ENCODE measurements at regions of chr19 and their contacts with region 1.

Region 1: DNA sequence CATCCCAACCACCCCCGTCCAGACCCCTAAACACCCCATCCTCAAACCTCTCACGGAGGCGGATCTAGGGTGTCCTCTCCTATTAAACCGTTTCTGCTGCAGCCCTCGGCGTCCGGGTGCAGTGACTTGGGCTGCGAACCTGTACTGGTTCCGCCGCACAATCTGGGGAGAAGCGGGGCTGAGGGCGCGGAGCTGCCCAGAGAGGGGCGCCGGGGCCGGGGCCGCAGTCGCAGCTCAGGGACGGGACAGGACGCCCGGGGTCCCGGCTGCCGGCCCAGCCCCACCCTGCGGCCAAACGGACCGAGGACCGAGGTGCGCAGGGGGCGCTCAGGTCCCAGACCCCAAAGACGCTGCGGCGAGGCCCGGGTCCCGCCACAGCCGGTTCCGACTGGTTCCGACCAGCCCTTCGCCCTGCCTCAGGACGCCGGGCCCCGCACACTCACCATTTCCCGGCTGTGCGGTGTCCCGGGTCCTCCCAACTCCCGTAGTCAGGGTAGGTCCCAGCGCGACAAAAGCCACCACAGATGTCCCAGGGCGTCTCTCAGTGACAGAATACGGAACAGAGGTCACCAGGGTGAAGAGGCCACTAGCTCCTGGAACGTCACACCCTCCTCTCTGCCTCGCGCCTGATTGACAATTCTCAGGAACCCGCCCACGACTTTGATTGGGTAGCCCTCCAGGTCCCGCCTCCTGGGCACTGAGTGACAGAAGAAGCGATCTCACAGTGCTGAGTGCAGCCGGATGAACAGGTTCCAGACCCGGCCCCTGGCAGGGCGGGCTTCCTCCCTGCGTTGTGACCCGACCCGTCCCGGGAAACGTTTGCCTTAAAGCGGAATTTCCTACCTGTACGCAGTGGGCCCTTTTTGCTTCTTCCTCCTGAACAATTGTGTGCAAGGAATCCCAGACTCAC is at the start of gene ZNF44:
- DNase-seq: peak; percentile 99
- H3K4me3 Mint-ChIP-seq: peak within 1 kb of the TSS; percentile 94
- H3K27ac Mint-ChIP-seq: peak within 1 kb of the TSS; percentile 92
- H3K4me1 Mint-ChIP-seq: peaks cover 1% of the 10 kb centered on the region
- H3K27me3 Mint-ChIP-seq: no peaks in the 10 kb centered on the region
- CTCF ChIP-seq: no peak
- total RNA-seq, gene ZNF44: 10.3 and 10.5 TPM in 2 replicates

Region 2: DNA sequence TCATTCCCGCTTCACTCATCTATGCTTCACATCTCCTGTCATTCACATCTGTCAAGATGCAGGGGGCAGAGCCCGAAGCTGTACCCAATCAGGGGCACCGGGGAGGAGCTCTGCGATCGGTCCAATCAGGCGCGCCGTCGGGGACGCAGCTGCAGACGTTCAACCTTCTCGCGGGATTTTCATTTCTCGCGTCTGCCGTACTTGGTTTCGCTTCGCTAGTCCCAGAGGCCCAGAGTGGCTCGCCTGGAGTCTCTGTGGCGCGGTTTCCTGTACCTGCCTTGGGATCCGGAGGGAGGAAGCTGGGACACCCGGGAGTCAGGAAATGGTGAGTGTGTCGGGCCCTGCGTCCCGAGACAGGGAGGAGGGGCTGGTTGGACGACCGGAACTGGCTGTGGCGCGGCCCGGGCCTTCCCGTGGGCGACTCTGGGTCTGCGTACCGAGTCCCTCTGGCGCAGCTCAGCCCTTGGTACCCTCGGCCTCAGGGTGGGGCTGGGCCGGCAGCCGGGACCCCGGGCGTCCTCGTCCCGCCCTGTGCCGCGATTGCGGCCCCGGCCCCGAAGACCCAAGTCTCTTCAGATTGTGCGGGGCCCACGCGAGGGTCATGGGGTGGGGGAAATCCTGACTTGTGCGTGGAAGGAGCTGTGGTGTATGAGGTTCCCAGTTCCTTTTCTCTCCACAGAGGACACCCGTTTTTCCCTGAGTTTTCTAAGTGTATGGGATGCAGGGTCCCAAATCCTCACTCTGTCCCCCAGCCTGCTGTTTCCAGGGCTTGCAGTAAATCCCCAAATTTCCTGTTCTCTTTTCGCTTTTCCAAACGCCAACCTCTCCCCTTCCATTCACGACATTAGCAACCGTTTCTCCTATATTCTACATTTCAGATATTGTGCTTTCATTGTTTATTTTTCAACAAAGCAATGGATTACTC is 131.4 kb before region 1 on chr19 and contains the start of gene ZNF136:
- CTCF ChIA-PET with region 1: no interaction called
- POLR2A ChIA-PET with region 1: interaction called, 10 read pairs
- intact Hi-C with region 1: loop called (anchors 2 kb)
- DNase-seq: peak; percentile 96
- H3K4me3 Mint-ChIP-seq: peak within 1 kb of the TSS; percentile 83
- H3K27ac Mint-ChIP-seq: peak within 1 kb of the TSS; percentile 97
- H3K4me1 Mint-ChIP-seq: peaks cover 8% of the 10 kb centered on the region
- H3K27me3 Mint-ChIP-seq: no peaks in the 10 kb centered on the region
- CTCF ChIP-seq: no peak
- total RNA-seq, gene ZNF136: 3.7 and 4.3 TPM in 2 replicates

Region 3: GRCh38 chr19:12230751-12231733 is 63.5 kb before region 1 on chr19:
- CTCF ChIA-PET with region 1: no interaction called
- POLR2A ChIA-PET with region 1: interaction called, 12 read pairs
- intact Hi-C with region 1: no loop called
- DNase-seq: no peak
- H3K4me3 Mint-ChIP-seq: no peak overlapping the region
- H3K27ac Mint-ChIP-seq: peak overlapping the region; percentile 55
- H3K4me1 Mint-ChIP-seq: no peaks in the 10 kb centered on the region
- H3K27me3 Mint-ChIP-seq: no peaks in the 10 kb centered on the region
- CTCF ChIP-seq: no peak

Region 4: GRCh38 chr19:12333162-12334159 is 39.0 kb after region 1 on chr19 and contains the start of gene ZNF563:
- CTCF ChIA-PET with region 1: interaction called, 5 read pairs
- POLR2A ChIA-PET with region 1: interaction called, 11 read pairs
- intact Hi-C with region 1: loop called (anchors 2 kb)
- DNase-seq: peak; percentile 87
- H3K4me3 Mint-ChIP-seq: peak within 1 kb of the TSS; percentile 97
- H3K27ac Mint-ChIP-seq: peak within 1 kb of the TSS; percentile 89
- H3K4me1 Mint-ChIP-seq: peaks cover 11% of the 10 kb centered on the region
- H3K27me3 Mint-ChIP-seq: no peaks in the 10 kb centered on the region
- CTCF ChIP-seq: no peak
- total RNA-seq, gene ZNF563: 1.1 and 1.3 TPM in 2 replicates

Region 5: GRCh38 chr19:12440541-12441316 is 146.2 kb after region 1 on chr19 and contains the start of gene ZNF443:
- CTCF ChIA-PET with region 1: no interaction called
- POLR2A ChIA-PET with region 1: interaction called, 4 read pairs
- intact Hi-C with region 1: loop called (anchors 2 kb)
- DNase-seq: peak; percentile 99
- H3K4me3 Mint-ChIP-seq: peak within 1 kb of the TSS; percentile 92
- H3K27ac Mint-ChIP-seq: peak within 1 kb of the TSS; percentile 72
- H3K4me1 Mint-ChIP-seq: no peaks in the 10 kb centered on the region
- H3K27me3 Mint-ChIP-seq: no peaks in the 10 kb centered on the region
- CTCF ChIP-seq: no peak
- total RNA-seq, gene ZNF443: 0.79 and 1.6 TPM in 2 replicates

Region 6: GRCh38 chr19:12551060-12551832 is 256.7 kb after region 1 on chr19 and contains the start of gene ZNF564:
- CTCF ChIA-PET with region 1: interaction called, 3 read pairs
- POLR2A ChIA-PET with region 1: interaction called, 12 read pairs
- intact Hi-C with region 1: no loop called
- DNase-seq: peak; percentile 99
- H3K4me3 Mint-ChIP-seq: peak within 1 kb of the TSS; percentile 90
- H3K27ac Mint-ChIP-seq: peak within 1 kb of the TSS; percentile 90
- H3K4me1 Mint-ChIP-seq: peaks cover 6% of the 10 kb centered on the region
- H3K27me3 Mint-ChIP-seq: no peaks in the 10 kb centered on the region
- CTCF ChIP-seq: no peak
- total RNA-seq, gene ZNF564: 4.4 and 5.1 TPM in 2 replicates

Measured in MCF 10A (cell line).